Dorsolateral prefrontal cortex (tissue), 120 donors: ENCODE measurements at regions of chr17 and their contacts with region 1.

Region 1: DNA sequence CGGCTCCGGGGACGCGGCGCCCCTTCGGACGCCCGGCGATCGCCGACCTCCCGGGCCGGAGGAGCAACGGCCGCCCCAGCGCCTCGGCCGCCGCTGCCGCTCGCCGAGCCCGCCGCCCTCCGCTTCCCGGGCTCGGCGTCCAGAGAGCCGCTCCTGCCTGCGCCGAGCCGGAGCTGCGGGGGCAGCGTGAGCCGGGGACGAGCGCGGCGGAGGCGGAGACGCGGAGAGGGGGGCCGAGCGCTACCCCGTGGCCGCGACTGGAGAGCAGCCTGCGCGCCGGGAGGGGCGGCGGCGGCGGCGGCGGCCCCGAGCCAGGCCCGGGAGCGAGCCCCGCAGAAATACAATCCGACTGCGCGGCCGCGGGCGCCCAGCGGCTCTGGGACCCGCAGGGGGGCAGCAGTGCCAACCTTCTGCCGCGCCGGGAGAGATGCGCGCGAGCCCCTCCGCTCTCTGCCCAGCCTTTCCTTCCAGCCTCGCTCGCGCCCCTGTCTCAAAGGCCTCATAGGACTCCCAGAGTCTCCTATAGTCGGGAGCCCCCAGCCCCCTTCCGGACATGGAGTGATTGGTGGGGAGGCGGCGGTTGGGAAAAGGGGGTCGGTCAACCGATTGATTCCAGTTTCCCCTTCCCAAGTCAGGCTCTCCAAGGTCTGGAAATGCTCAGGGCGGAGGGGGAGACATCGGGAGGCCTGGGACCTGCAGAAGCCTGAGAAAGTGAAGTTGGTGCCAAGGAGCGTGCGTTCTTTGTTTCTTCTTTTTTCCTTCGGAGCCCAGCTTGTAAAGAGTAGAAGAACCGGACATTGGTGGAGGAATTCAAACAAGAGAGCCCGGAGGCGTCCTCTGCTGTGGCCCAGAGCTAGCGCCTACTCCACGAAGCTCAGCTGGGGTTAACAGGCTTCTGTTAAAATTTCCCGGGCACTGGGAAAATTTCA is 1.1 kb upstream of the SDK2 start:
- DNase-seq: peak; percentile 39 to 86 (median 62)
- H3K4me3 ChIP-seq: peak overlapping the region in 58 of 59 donors; percentile 26 to 80 (median 64)
- H3K27ac ChIP-seq: peak overlapping the region in 42 of 59 donors; percentile 9 to 81 (median 58)
- H3K27me3 ChIP-seq: peaks cover 0 to 16% (median 0%) of the 10 kb centered on the region in 45 donors
- CTCF ChIP-seq: peak in 45 of 56 donors; percentile 8 to 65 (median 39)

Region 2: GRCh38 chr17:73510981-73511718 is 134.2 kb before region 1 on chr17:
- intact Hi-C with region 1: loop called in 1 of 2 experiments (anchors 5 kb)
- DNase-seq: peak in 3 of 10 donors; percentile 30 to 58 (median 39)
- H3K4me3 ChIP-seq: peak overlapping the region in 8 of 59 donors; percentile 2 to 35 (median 14)
- H3K27ac ChIP-seq: peak overlapping the region in 8 of 59 donors; percentile 7 to 59 (median 32)
- H3K27me3 ChIP-seq: peaks cover 0 to 36% (median 0%) of the 10 kb centered on the region in 45 donors
- CTCF ChIP-seq: peak in 1 of 56 donors; percentile 15

Region 3: GRCh38 chr17:73770115-73770848 is 125.0 kb after region 1 on chr17:
- intact Hi-C with region 1: loop called in 1 of 2 experiments (anchors 5 kb)
- DNase-seq: peak; percentile 48 to 91 (median 84)
- H3K4me3 ChIP-seq: peak overlapping the region in 5 of 59 donors; percentile 1 to 32 (median 12)
- H3K27ac ChIP-seq: peak overlapping the region in 25 of 59 donors; percentile 0 to 75 (median 46)
- H3K27me3 ChIP-seq: no peaks in the 10 kb centered on the region
- CTCF ChIP-seq: peak in 6 of 56 donors; percentile 5 to 30 (median 14)

Region 4: DNA sequence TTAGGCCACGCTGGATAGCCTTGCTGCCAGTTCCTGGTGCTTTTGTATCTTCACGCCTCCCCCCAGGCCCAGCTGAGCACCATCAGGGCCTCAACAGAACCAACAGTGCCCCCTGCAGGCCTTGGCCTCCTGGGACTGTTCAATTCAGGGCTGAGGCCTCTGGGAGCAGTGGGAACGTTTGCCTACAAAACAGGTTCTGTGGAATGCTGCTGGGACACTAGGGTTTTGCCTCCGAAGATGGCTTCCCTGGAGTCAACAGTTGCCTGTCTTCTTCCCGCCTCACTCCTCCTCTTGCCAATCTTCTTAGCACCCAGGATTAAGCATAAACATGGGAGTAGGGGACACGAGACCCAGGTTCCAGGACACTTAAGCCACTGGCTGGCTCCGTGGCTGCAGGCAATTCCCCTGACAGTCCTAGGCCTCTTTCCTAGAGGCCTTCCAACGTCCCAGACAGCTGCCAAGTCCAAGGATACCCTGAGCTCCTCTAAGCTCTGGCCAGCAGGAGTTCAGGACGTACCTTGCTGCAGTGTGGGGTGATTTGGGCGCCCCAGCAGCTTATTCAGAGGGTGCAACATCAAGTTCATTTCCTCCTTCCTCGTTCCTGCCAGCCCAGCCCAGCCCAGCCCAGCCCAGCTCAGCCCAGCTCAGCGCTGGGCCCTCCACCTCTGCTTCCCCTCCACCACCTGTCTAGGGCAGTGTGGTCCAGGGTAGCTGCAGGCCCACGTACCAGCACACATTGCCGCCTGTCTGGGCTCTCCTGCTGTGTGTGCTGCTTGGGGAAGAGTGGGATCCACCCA is 311.6 kb after region 1 on chr17:
- intact Hi-C with region 1: loop called (anchors 5 to 10 kb)
- DNase-seq: peak; percentile 27 to 85 (median 78)
- H3K4me3 ChIP-seq: no peak overlapping the region
- H3K27ac ChIP-seq: no peak overlapping the region
- H3K27me3 ChIP-seq: peaks cover 0 to 4% (median 0%) of the 10 kb centered on the region in 45 donors
- CTCF ChIP-seq: peak; percentile 13 to 85 (median 70)